Common myeloid progenitor, CD34-positive (primary cell): ENCODE measurements at regions of chr16 and their contacts with region 1.

Region 1: DNA sequence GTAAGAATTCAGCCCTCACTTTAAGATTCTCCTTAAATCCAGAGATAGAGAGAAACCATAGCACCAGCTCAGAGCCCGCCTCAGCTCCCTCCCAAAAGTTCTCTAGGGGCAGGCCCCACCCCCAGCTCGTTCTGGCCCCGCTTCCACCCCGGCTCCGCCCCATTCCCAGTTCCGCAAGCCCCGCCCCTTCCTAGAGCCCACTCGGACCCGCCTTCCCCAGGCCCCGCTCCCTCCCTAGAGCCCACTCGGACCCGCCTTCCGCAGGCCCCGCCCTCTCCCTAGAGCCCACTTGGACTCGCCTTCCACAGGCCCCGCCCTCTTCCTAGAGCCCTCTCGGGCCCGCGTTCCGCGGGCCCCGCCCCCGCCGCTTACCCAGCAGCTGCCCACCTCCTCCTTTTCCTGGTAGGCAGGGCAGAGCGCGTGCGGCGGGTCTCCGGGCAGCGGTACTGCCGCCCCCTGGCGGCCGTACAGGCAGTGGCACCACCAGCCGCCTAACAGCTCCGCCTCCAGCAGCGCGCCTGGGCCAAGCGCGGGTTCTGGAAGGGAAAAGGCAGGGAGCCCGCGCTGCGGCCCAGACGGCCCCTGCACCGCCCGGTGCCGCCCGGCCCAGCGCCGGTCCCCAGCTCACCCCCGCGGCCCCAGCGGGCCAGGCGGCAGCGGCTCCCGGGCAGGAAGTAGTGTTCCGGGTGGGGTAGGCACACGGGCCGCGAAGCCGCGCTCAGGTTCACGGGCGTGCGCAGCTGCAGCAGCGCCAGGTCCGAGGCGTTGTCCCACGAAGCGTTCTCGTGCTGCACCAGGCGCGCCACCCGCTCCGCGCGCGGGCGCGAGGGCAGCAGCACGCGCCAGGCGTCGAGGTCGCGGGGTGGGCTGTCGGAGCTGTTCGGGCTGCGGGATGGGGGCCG is 6.8 kb upstream of the PRSS8 start:
- DNase-seq: peak; percentile 98 to 99 (median 99)
- H3K4me3 ChIP-seq: peak overlapping the region; percentile 40 to 75 (median 52)
- H3K27ac ChIP-seq: peak overlapping the region in 1 of 2 experiments; percentile 77
- H3K4me1 ChIP-seq: peaks cover 0 to 17% (median 17%) of the 10 kb centered on the region in 4 experiments
- H3K27me3 ChIP-seq: no peaks in the 10 kb centered on the region

Region 2: DNA sequence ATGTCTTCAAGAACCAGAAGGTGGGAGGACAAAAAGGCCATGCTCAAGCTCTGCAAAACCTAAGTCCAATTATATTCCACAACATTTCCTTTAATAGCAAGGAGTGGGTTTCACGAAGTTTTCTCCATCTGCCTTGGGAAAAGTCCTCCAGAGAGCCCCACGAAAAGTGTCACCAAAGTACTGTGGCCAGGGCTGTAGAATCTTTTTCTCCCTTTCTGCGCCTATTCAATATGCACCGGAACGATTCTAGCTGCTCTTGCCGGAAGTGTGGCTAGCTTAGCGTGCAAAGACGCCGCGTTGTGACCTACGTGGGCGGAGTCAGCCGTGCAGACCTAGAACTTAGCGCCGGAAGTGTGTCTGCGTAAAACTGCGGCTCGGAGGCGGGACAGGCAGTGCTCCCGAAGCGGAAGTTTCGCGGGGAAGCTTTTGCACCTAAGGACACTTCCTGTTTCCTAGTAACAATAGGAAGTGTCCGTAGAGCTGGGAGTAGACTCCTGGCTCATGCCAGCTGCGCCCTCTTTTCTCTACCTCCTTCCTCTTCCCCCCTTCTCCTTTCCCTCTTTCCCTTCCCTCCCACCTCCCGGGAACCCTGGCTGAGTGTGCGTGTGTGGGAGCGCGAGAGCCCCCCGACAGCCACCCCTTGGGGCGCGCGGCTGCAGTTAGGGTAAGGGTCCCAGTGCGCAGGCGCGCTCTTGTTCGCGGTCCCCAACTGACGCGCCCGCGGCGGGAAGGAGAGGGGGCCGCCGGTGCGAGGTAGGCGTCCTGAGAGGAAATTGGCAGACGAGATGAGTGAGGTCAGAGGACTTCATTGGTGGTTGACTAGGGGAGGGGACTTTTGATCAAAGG is 68.2 kb before region 1 on chr16 and contains the starts of genes ZNF646 and ZNF668:
- CTCF ChIA-PET with region 1: interaction called, 12 read pairs
- POLR2A ChIA-PET with region 1: interaction called, 5 read pairs
- DNase-seq: peak; percentile 100
- H3K4me3 ChIP-seq: peak within 1 kb of the TSS; percentile 93 to 100 (median 97)
- H3K27ac ChIP-seq: peak within 1 kb of the TSS; percentile 97 to 99
- H3K4me1 ChIP-seq: peaks cover 12 to 34% (median 24%) of the 10 kb centered on the region in 4 experiments
- H3K27me3 ChIP-seq: no peaks in the 10 kb centered on the region

Region 3: GRCh38 chr16:31099860-31100638 is 42.3 kb before region 1 on chr16:
- CTCF ChIA-PET with region 1: interaction called, 16 read pairs
- POLR2A ChIA-PET with region 1: no interaction called
- DNase-seq: no peak
- H3K4me3 ChIP-seq: no peak overlapping the region
- H3K27ac ChIP-seq: no peak overlapping the region
- H3K4me1 ChIP-seq: peaks cover 3 to 8% (median 6%) of the 10 kb centered on the region in 4 experiments
- H3K27me3 ChIP-seq: no peaks in the 10 kb centered on the region

Region 4: DNA sequence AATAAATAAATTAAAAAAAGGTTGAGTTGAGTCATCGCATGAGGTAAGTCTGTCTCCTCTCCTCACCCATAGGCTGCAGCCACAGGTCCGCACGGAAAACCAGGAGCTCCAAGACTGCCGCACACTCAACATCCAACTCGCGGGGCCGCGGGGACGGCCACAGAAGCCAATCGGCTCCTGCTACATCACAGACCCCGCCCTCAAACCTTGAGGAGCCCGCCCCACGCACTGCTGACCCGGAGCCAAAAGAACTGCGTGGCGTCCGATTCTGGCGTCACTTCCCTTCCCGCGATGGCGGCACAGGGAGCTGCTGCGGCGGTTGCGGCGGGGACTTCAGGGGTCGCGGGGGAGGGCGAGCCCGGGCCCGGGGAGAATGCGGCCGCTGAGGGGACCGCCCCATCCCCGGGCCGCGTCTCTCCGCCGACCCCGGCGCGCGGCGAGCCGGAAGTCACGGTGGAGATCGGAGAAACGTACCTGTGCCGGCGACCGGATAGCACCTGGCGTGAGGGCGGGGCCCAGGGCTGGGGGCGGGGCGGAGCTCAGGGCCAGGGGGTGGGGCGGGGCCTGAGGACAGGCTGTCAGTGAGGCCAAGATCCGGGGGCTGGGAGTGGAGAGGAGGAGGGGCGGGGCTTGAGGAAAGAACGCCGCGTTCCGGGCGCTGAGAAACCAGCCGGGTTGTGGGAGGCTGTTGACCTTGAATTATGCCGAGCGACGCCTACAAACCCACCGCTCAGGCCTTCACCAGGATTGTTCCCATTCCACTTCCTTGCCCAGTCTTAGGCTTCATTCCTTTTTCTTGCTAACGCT is 24.8 kb before region 1 on chr16 and contains the start of gene KAT8:
- CTCF ChIA-PET with region 1: interaction called, 27 read pairs
- POLR2A ChIA-PET with region 1: interaction called, 14 read pairs
- DNase-seq: peak; percentile 98 to 99 (median 99)
- H3K4me3 ChIP-seq: peak within 1 kb of the TSS; percentile 64 to 96 (median 87)
- H3K27ac ChIP-seq: peak within 1 kb of the TSS; percentile 51 to 88
- H3K4me1 ChIP-seq: peaks cover 12 to 40% (median 34%) of the 10 kb centered on the region in 4 experiments
- H3K27me3 ChIP-seq: no peaks in the 10 kb centered on the region

Region 5: GRCh38 chr16:31128711-31129567 is 13.4 kb before region 1 on chr16:
- CTCF ChIA-PET with region 1: interaction called, 123 read pairs
- POLR2A ChIA-PET with region 1: interaction called, 22 read pairs
- DNase-seq: peak; percentile 91 to 99 (median 96)
- H3K4me3 ChIP-seq: peak overlapping the region in 3 of 7 experiments; percentile 38 to 52 (median 50)
- H3K27ac ChIP-seq: peak overlapping the region; percentile 93 to 97
- H3K4me1 ChIP-seq: peaks cover 6 to 57% (median 49%) of the 10 kb centered on the region in 4 experiments
- H3K27me3 ChIP-seq: no peaks in the 10 kb centered on the region

Region 6: GRCh38 chr16:31157136-31157535 is 14.8 kb after region 1 on chr16:
- CTCF ChIA-PET with region 1: interaction called, 19 read pairs
- POLR2A ChIA-PET with region 1: interaction called, 3 read pairs
- DNase-seq: peak in 2 of 3 donors; percentile 68 to 74
- H3K4me3 ChIP-seq: peak overlapping the region in 2 of 7 experiments; percentile 11 to 50
- H3K27ac ChIP-seq: no peak overlapping the region
- H3K4me1 ChIP-seq: peaks cover 0 to 11% (median 6%) of the 10 kb centered on the region in 4 experiments
- H3K27me3 ChIP-seq: peaks cover 0 to 1% (median 0%) of the 10 kb centered on the region in 5 experiments

Region 7: GRCh38 chr16:31298967-31299366 is 156.6 kb after region 1 on chr16:
- CTCF ChIA-PET with region 1: no interaction called
- POLR2A ChIA-PET with region 1: no interaction called
- DNase-seq: peak; percentile 55 to 71 (median 70)
- H3K4me3 ChIP-seq: no peak overlapping the region
- H3K27ac ChIP-seq: no peak overlapping the region
- H3K4me1 ChIP-seq: peaks cover 0 to 7% (median 3%) of the 10 kb centered on the region in 4 experiments
- H3K27me3 ChIP-seq: no peaks in the 10 kb centered on the region

Region 8: GRCh38 chr16:31331141-31331764 is 188.9 kb after region 1 on chr16:
- CTCF ChIA-PET with region 1: no interaction called
- POLR2A ChIA-PET with region 1: no interaction called
- DNase-seq: peak; percentile 61 to 83 (median 76)
- H3K4me3 ChIP-seq: peak overlapping the region; percentile 48 to 84 (median 56)
- H3K27ac ChIP-seq: no peak overlapping the region
- H3K4me1 ChIP-seq: peaks cover 4 to 32% (median 21%) of the 10 kb centered on the region in 4 experiments
- H3K27me3 ChIP-seq: peaks cover 0 to 5% (median 0%) of the 10 kb centered on the region in 5 experiments